ENCODE measurements at regions of chr1 and their contacts with region 1.

Region 1: DNA sequence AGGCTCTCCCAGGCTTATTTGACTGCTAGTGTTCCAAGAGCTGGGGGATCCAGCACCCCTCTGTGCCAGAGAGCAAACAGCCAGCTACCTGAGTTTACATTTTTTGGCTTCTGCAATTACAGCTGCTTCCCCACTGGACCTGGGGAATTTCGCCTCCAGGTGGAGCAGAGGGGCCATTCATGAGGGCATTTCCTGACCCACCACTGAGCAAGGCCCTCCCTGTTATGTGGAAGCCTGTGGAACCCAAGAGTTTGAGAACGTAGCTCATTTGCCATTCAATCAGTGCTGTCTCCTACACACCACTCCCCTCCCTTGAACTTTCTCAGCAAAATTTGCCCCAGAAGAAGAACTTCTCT is 42.7 kb upstream of the TMEM51 start:
- DNase-seq: no peak
- H3K4me3 Mint-ChIP-seq: no peak overlapping the region
- H3K27ac Mint-ChIP-seq: no peak overlapping the region
- H3K4me1 Mint-ChIP-seq: peaks cover 5% of the 10 kb centered on the region
- H3K27me3 Mint-ChIP-seq: peaks cover 12% of the 10 kb centered on the region

Region 2: GRCh38 chr1:15128520-15129313 is 17.9 kb after region 1 on chr1:
- intact Hi-C with region 1: no loop called
- DNase-seq: peak; percentile 92
- H3K4me3 Mint-ChIP-seq: no peak overlapping the region
- H3K27ac Mint-ChIP-seq: no peak overlapping the region
- H3K4me1 Mint-ChIP-seq: no peaks in the 10 kb centered on the region
- H3K27me3 Mint-ChIP-seq: peaks cover 26% of the 10 kb centered on the region

Region 3: DNA sequence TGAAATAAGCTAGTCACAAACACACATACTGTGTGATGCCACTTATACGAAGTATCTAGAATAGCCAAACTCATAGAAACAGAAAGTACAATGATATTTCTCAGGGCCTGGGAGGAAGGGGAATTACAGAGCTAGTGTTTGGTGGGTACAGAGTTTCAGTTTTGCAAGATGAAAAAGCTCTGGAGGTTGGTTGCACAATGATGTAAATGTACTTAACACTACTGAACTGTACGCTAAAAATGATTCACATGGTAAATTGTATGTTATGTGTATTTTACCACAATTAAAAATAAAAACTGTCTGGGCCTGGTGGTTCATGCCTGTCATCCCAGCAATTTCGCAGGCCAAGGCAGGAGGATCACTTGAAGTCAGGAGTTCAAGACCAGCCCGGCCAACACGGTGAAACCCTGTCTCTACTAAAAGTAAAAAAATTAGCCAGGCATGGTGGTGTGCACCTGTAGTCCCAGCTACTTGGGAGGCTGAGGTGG is 120.9 kb after region 1 on chr1:
- intact Hi-C with region 1: loop called (anchors 5 kb)
- DNase-seq: peak; percentile 79
- H3K4me3 Mint-ChIP-seq: no peak overlapping the region
- H3K27ac Mint-ChIP-seq: peak overlapping the region; percentile 42
- H3K4me1 Mint-ChIP-seq: peaks cover 17% of the 10 kb centered on the region
- H3K27me3 Mint-ChIP-seq: peaks cover 34% of the 10 kb centered on the region

Measured in activated CD4-positive, alpha-beta T cell treated with anti-CD3 and anti-CD28 coated beads, Interleukin-2, amount 10 ng/mL, durations not matched to agents 24 days and 14 days (primary cell).